Vagina (tissue), 2 donors: ENCODE measurements at regions of chr7 and their contacts with region 1.

Region 1: GRCh38 chr7:131107337-131108211 is 220.1 kb upstream of the MKLN1 start:
- DNase-seq: peak in 1 of 2 donors; percentile 94
- H3K4me3 ChIP-seq: peak overlapping the region; percentile 87 to 100
- H3K27ac ChIP-seq: peak overlapping the region; percentile 100
- H3K4me1 ChIP-seq: peaks cover 41% of the 10 kb centered on the region
- H3K27me3 ChIP-seq: no peaks in the 10 kb centered on the region
- CTCF ChIP-seq: no peak
- POLR2A ChIP-seq: peak in 1 of 2 donors; percentile 89

Region 2: GRCh38 chr7:130896898-130897514 is 210.6 kb before region 1 on chr7:
- intact Hi-C with region 1: loop called (anchors 10 kb)
- DNase-seq: no peak
- H3K4me3 ChIP-seq: no peak overlapping the region
- H3K27ac ChIP-seq: peak overlapping the region; percentile 86
- H3K4me1 ChIP-seq: peaks cover 93% of the 10 kb centered on the region
- H3K27me3 ChIP-seq: no peaks in the 10 kb centered on the region
- CTCF ChIP-seq: peak; percentile 54 to 82 (median 78)
- POLR2A ChIP-seq: no peak

Region 3: GRCh38 chr7:131219312-131220041 is 111.9 kb after region 1 on chr7:
- intact Hi-C with region 1: loop called (anchors 10 kb)
- DNase-seq: no peak
- H3K4me3 ChIP-seq: no peak overlapping the region
- H3K27ac ChIP-seq: peak overlapping the region; percentile 51
- H3K4me1 ChIP-seq: no peaks in the 10 kb centered on the region
- H3K27me3 ChIP-seq: no peaks in the 10 kb centered on the region
- CTCF ChIP-seq: no peak
- POLR2A ChIP-seq: no peak

Region 4: DNA sequence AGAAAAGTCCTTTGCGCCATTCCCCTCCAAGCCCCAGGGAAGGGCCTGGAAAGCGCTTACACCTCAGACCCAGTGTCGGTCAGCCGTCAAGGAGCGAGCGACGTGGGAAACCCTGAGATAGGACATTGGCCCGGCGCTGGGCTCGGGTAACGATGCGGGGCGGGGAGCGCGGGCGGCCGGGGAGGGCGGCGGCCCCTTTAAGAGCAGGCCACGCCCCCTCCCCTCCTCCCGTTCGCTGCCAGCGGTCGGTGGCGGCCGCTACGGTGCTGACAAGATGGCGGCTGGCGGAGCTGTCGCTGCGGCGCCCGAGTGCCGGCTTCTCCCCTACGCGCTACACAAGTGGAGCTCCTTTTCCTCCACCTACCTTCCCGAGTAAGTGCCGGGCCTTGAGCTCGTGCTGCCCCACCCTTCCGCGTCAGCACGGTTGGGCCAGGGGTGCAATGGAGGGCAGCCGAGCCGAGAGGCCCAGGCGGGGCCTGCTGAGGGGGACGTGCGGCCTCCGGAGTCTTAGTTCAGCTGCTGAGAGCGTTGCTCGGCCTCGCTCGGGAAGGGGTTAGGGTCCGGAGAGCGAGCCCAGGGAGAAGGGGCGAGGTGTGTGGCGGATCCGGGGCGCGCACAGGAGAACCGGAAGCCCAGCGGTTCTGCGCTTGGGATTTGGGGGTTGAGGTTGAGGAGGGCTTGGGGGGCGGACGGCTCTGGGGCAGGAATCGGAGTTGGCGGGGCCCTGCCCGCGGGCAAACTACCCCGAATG is 220.2 kb after region 1 on chr7 and contains the start of gene MKLN1:
- intact Hi-C with region 1: loop called (anchors 1 kb)
- DNase-seq: no peak
- H3K4me3 ChIP-seq: peak within 1 kb of the TSS; percentile 99
- H3K27ac ChIP-seq: peak within 1 kb of the TSS; percentile 100
- H3K4me1 ChIP-seq: peaks cover 49% of the 10 kb centered on the region
- H3K27me3 ChIP-seq: no peaks in the 10 kb centered on the region
- CTCF ChIP-seq: peak in 1 of 3 experiments; percentile 14
- POLR2A ChIP-seq: peak in 1 of 2 donors; percentile 67
- total RNA-seq, gene MKLN1: 48.4 TPM

Region 5: DNA sequence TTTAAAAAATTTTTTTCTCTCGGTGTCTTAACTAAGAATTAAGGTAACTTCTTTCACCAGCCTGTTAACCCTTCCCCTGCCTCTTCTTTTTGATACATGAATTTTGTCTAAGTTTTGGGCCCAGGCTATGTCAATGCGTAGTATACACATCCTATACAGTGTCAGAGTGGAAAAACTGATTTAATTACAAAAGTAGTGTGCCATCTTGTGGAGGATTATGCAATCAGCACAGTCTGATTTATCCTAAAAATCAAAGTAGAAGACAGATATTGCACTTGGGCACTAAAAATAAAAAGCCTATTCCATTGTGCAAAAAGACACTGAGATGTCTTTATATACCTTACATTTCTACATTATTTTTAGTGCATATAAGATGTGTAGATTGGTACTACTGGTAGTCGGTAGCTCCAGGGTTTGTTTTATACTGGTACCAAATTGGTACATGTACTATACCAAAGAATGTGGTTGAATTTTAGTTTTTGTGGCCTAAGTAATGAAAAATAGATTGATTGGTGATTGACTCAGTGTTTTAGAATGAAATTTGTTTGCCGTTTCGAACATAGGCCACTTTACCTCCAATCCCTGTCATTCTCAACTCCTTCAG is 316.7 kb after region 1 on chr7:
- intact Hi-C with region 1: loop called (anchors 10 kb)
- DNase-seq: no peak
- H3K4me3 ChIP-seq: no peak overlapping the region
- H3K27ac ChIP-seq: no peak overlapping the region
- H3K4me1 ChIP-seq: peaks cover 21% of the 10 kb centered on the region
- H3K27me3 ChIP-seq: no peaks in the 10 kb centered on the region
- CTCF ChIP-seq: peak; percentile 46 to 54 (median 46)
- POLR2A ChIP-seq: no peak